ENCODE measurements at regions of chr9 and their contacts with region 1.

Region 1: GRCh38 chr9:131178382-131178781 is 53.0 kb downstream of the NUP214 start:
- ATAC-seq: peak; percentile 84 to 99 (median 93)
- H3K4me3 ChIP-seq: no peak overlapping the region
- H3K27ac ChIP-seq: peak overlapping the region in 1 of 2 donors; percentile 7
- H3K4me1 ChIP-seq: no peaks in the 10 kb centered on the region

Region 2: GRCh38 chr9:131024978-131025868 is 153.2 kb before region 1 on chr9:
- in situ Hi-C with region 1: no loop called
- ATAC-seq: peak in 1 of 8 experiments; percentile 16
- H3K4me3 ChIP-seq: no peak overlapping the region
- H3K27ac ChIP-seq: peak overlapping the region; percentile 30 to 43
- H3K4me1 ChIP-seq: no peaks in the 10 kb centered on the region

Region 3: DNA sequence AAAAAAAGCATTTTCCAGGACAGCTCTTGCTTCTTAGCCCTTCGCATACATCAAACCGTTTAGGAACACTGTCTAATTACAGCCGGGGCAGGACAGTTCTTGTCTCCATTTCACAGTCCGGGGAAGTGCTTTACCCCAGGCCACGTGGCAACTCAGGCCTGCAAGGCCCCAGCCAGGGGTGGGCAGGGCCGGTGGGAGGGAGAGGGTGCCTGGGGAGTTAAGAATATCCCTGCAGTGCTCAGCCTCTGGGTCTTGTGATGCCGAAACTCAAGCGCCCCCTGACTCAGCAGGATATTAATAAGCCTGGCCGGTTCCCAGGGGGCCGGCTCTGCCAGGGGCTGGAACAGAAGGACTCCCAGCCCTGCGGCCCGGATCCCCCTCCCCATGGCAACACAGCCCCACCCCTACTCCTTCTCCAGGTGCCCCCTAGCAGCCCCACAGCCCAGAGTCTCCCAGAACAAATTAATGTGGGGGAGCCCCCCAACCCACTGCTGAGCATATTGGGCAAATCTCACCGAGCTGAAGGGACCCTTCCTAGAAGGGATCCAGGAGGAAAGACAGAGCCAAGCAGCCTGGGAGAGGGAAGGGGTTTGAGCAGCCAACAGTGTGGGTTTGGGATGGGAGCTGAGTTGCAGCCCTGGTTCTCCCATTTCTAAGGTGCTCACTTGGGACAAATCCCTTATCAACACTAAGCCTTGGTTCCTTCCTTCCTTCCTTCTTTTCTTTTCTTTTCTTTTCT is 156.4 kb after region 1 on chr9:
- in situ Hi-C with region 1: loop called in 7 of 9 experiments (anchors 10 to 25 kb)
- ATAC-seq: peak in 7 of 8 experiments; percentile 52 to 95 (median 93)
- H3K4me3 ChIP-seq: no peak overlapping the region
- H3K27ac ChIP-seq: peak overlapping the region; percentile 55 to 68
- H3K4me1 ChIP-seq: peaks cover 8 to 11% of the 10 kb centered on the region in 2 donors

Region 4: DNA sequence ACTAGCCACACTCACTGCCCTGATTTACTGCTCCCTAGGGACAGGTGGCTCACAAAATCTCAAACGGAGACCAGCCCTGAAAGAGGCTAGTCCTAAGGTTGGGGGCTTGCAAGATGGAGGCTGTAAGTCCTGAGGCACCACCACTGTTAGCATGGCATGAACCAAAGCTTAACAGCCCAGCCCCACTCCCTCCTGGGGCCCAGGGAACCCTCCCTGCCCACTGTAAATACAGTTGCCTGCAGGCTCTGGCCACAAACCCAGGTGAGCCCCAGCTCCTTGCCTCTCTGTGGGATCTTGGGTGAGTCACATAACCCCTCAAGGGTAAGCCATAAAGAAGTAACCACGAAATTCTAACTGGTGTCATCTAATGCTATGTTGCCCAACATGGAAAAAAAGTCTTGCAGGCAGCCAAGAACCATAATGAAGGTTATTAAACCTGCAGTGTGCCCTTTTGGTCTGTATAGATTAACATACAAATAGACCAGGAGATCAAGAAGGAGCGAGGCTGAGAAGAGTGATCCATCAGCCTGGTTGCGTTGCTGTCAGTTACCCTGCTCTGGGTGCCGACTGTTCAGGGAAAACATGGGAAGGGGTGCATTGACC is 322.7 kb after region 1 on chr9:
- in situ Hi-C with region 1: no loop called
- ATAC-seq: no peak
- H3K4me3 ChIP-seq: no peak overlapping the region
- H3K27ac ChIP-seq: no peak overlapping the region
- H3K4me1 ChIP-seq: peaks cover 11 to 22% of the 10 kb centered on the region in 2 donors